Activated CD8-positive, alpha-beta T cell treated with anti-CD3 and anti-CD28 coated beads, Interleukin-2, amount 10 ng/mL, durations not matched to agents 7 days and 5 days (primary cell): ENCODE measurements at regions of chr21 and their contacts with region 1.

Region 1: GRCh38 chr21:44742418-44743153 is 31.2 kb upstream of the TSPEAR start:
- DNase-seq: no peak
- ATAC-seq: no peak
- H3K4me3 Mint-ChIP-seq: no peak overlapping the region
- H3K27ac Mint-ChIP-seq: no peak overlapping the region
- H3K4me1 Mint-ChIP-seq: no peaks in the 10 kb centered on the region
- H3K27me3 Mint-ChIP-seq: no peaks in the 10 kb centered on the region

Region 2: GRCh38 chr21:44510508-44511210 is 231.9 kb before region 1 on chr21:
- CTCF ChIA-PET with region 1: interaction called, 51 read pairs
- POLR2A ChIA-PET with region 1: no interaction called
- DNase-seq: peak; percentile 81
- ATAC-seq: peak; percentile 93
- H3K4me3 Mint-ChIP-seq: peak overlapping the region; percentile 22
- H3K27ac Mint-ChIP-seq: no peak overlapping the region
- H3K4me1 Mint-ChIP-seq: peaks cover 2% of the 10 kb centered on the region
- H3K27me3 Mint-ChIP-seq: no peaks in the 10 kb centered on the region

Region 3: GRCh38 chr21:44647222-44647552 is 95.4 kb before region 1 on chr21:
- CTCF ChIA-PET with region 1: no interaction called
- POLR2A ChIA-PET with region 1: no interaction called
- DNase-seq: peak; percentile 16
- ATAC-seq: no peak
- H3K4me3 Mint-ChIP-seq: no peak overlapping the region
- H3K27ac Mint-ChIP-seq: peak overlapping the region; percentile 60
- H3K4me1 Mint-ChIP-seq: peaks cover 4% of the 10 kb centered on the region
- H3K27me3 Mint-ChIP-seq: no peaks in the 10 kb centered on the region